Mammary epithelial cell (primary cell): ENCODE measurements at regions of chrX and their contacts with region 1.

Region 1: GRCh38 chrX:13620207-13620606 is 32.7 kb upstream of the TCEANC start:
- DNase-seq: no peak
- H3K4me3 ChIP-seq: no peak overlapping the region
- H3K27ac ChIP-seq: no peak overlapping the region
- H3K4me1 ChIP-seq: no peaks in the 10 kb centered on the region
- H3K27me3 ChIP-seq: peaks cover 6% of the 10 kb centered on the region
- CTCF ChIP-seq: no peak

Region 2: GRCh38 chrX:13398073-13398823 is 222.0 kb before region 1 on chrX:
- CTCF ChIA-PET with region 1: no interaction called
- dilution Hi-C with region 1: no loop called
- in situ Hi-C with region 1: no loop called
- intact Hi-C with region 1: no loop called
- DNase-seq: peak; percentile 100
- H3K4me3 ChIP-seq: no peak overlapping the region
- H3K27ac ChIP-seq: peak overlapping the region; percentile 95
- H3K4me1 ChIP-seq: peaks cover 30% of the 10 kb centered on the region
- H3K27me3 ChIP-seq: no peaks in the 10 kb centered on the region
- CTCF ChIP-seq: no peak

Region 3: DNA sequence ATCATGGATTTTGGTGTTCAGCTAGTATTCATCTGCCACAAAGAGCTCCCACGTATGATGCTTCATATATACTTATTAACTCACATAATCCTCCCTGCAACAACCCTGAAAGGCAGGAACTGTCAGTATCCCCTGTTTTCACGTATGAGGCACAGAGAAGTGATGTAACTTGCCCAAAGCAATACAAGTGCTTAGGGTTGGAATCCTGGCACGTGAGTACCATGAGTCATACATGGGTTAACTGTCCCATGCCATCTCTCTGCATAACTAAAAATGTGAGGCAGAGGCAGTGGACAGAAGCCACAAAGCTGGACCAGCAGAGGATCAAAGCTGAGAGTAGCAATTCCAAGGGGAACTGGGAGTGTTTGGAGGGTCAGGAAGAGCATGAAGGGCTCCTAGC is 86.5 kb before region 1 on chrX:
- CTCF ChIA-PET with region 1: no interaction called
- dilution Hi-C with region 1: loop called (anchors 5 kb)
- in situ Hi-C with region 1: no loop called
- intact Hi-C with region 1: no loop called
- DNase-seq: peak; percentile 70
- H3K4me3 ChIP-seq: no peak overlapping the region
- H3K27ac ChIP-seq: no peak overlapping the region
- H3K4me1 ChIP-seq: peaks cover 4% of the 10 kb centered on the region
- H3K27me3 ChIP-seq: peaks cover 2% of the 10 kb centered on the region
- CTCF ChIP-seq: no peak

Region 4: GRCh38 chrX:13607996-13608365 is 12.2 kb before region 1 on chrX:
- CTCF ChIA-PET with region 1: no interaction called
- dilution Hi-C with region 1: no loop called
- in situ Hi-C with region 1: no loop called
- intact Hi-C with region 1: loop called (anchors 2 kb)
- DNase-seq: peak; percentile 66
- H3K4me3 ChIP-seq: no peak overlapping the region
- H3K27ac ChIP-seq: peak overlapping the region; percentile 60
- H3K4me1 ChIP-seq: peaks cover 27% of the 10 kb centered on the region
- H3K27me3 ChIP-seq: no peaks in the 10 kb centered on the region
- CTCF ChIP-seq: no peak

Region 5: DNA sequence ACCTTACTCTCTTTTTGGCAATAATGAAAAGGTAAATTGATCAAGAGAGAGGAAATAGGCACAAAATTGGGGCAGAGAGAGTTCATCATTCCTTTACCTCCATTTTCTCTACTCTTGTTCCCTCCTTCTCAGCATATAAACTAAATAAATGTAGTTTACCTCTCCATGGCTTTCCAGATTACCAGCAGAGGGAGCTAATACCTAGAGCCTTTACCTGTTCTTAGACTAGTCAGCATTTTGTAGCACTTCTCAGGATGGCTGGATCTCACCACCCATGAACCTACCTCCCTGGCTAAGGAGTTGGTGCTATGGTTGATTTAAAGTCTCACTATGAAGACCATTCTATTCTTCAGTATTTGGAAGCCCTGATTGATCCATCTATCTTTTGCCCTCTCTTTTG is 130.0 kb after region 1 on chrX:
- CTCF ChIA-PET with region 1: no interaction called
- dilution Hi-C with region 1: no loop called
- in situ Hi-C with region 1: no loop called
- intact Hi-C with region 1: no loop called
- DNase-seq: peak; percentile 60
- H3K4me3 ChIP-seq: no peak overlapping the region
- H3K27ac ChIP-seq: no peak overlapping the region
- H3K4me1 ChIP-seq: peaks cover 15% of the 10 kb centered on the region
- H3K27me3 ChIP-seq: no peaks in the 10 kb centered on the region
- CTCF ChIP-seq: peak; percentile 75 to 78